ENCODE measurements at regions of chr5 and their contacts with region 1.

Region 1: GRCh38 chr5:103145196-103145595 is 25.1 kb downstream of the PPIP5K2 start:
- DNase-seq: no peak
- ATAC-seq: no peak
- H3K4me3 ChIP-seq: no peak overlapping the region
- H3K27ac ChIP-seq: no peak overlapping the region
- H3K4me1 ChIP-seq: no peaks in the 10 kb centered on the region
- H3K27me3 ChIP-seq: no peaks in the 10 kb centered on the region
- CTCF ChIP-seq: no peak
- EP300 ChIP-seq: no peak
- POLR2A ChIP-seq: no peak
- RAD21 ChIP-seq: no peak

Region 2: GRCh38 chr5:102778478-102778877 is 366.7 kb before region 1 on chr5:
- CTCF ChIA-PET with region 1: interaction called, 3 read pairs
- POLR2A ChIA-PET with region 1: no interaction called
- in situ Hi-C with region 1: loop called (anchors 10 kb)
- intact Hi-C with region 1: no loop called
- DNase-seq: no peak
- ATAC-seq: no peak
- H3K4me3 ChIP-seq: no peak overlapping the region
- H3K27ac ChIP-seq: no peak overlapping the region
- H3K4me1 ChIP-seq: no peaks in the 10 kb centered on the region
- H3K27me3 ChIP-seq: no peaks in the 10 kb centered on the region
- CTCF ChIP-seq: no peak
- EP300 ChIP-seq: no peak
- POLR2A ChIP-seq: no peak
- RAD21 ChIP-seq: no peak

Region 3: DNA sequence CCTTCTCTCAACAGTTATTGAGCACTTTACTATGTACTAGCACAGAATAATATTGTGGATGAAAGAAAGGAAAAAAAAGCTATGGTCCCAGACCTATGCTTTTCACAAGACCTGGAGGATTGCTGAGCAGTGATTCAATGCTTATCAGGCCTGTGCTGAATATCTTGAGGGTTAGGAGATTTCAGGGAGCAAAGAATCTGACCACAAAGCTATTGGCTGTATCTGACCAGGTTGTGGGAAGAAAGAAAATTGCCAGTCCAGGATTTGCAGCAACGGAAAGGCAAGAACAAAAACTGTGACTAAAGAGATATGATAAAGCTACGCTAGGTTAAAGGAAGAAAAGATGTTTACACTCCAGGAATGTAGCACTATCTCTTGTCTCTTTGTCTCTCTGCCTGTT is 98.5 kb after region 1 on chr5:
- CTCF ChIA-PET with region 1: no interaction called
- POLR2A ChIA-PET with region 1: no interaction called
- in situ Hi-C with region 1: no loop called
- intact Hi-C with region 1: no loop called
- DNase-seq: no peak
- ATAC-seq: no peak
- H3K4me3 ChIP-seq: no peak overlapping the region
- H3K27ac ChIP-seq: no peak overlapping the region
- H3K4me1 ChIP-seq: no peaks in the 10 kb centered on the region
- H3K27me3 ChIP-seq: peaks cover 0 to 6% of the 10 kb centered on the region in 2 experiments; a peak in 2 of 5 replicates
- CTCF ChIP-seq: no peak
- EP300 ChIP-seq: no peak
- POLR2A ChIP-seq: no peak
- RAD21 ChIP-seq: no peak

Region 4: GRCh38 chr5:103271570-103272289 is 126.5 kb after region 1 on chr5:
- CTCF ChIA-PET with region 1: no interaction called
- POLR2A ChIA-PET with region 1: no interaction called
- in situ Hi-C with region 1: no loop called
- intact Hi-C with region 1: no loop called
- DNase-seq: no peak
- ATAC-seq: no peak
- H3K4me3 ChIP-seq: no peak overlapping the region
- H3K27ac ChIP-seq: peak overlapping the region; percentile 42; the same call in 1 of the 3 replicates
- H3K4me1 ChIP-seq: peaks cover 0 to 25% of the 10 kb centered on the region in 2 experiments; a peak in 3 of 5 replicates
- H3K27me3 ChIP-seq: no peaks in the 10 kb centered on the region
- CTCF ChIP-seq: no peak
- EP300 ChIP-seq: no peak
- POLR2A ChIP-seq: no peak
- RAD21 ChIP-seq: no peak

Region 5: GRCh38 chr5:103410172-103410571 is 265.0 kb after region 1 on chr5:
- CTCF ChIA-PET with region 1: no interaction called
- POLR2A ChIA-PET with region 1: no interaction called
- in situ Hi-C with region 1: no loop called
- intact Hi-C with region 1: no loop called
- DNase-seq: no peak
- ATAC-seq: no peak
- H3K4me3 ChIP-seq: no peak overlapping the region
- H3K27ac ChIP-seq: no peak overlapping the region
- H3K4me1 ChIP-seq: no peaks in the 10 kb centered on the region
- H3K27me3 ChIP-seq: peaks cover 0 to 3% of the 10 kb centered on the region in 2 experiments; a peak in 1 of 5 replicates
- CTCF ChIP-seq: no peak
- EP300 ChIP-seq: no peak
- POLR2A ChIP-seq: no peak
- RAD21 ChIP-seq: no peak

Measured in K562 (cell line).